PC-3 (cell line): ENCODE measurements at regions of chr16 and their contacts with region 1.

Region 1: GRCh38 chr16:58345574-58346354 is 46.5 kb upstream of the GINS3 start:
- DNase-seq: peak; percentile 37
- ATAC-seq: no peak
- H3K4me3 ChIP-seq: no peak overlapping the region
- H3K27ac ChIP-seq: no peak overlapping the region
- H3K4me1 ChIP-seq: no peaks in the 10 kb centered on the region
- H3K27me3 ChIP-seq: no peaks in the 10 kb centered on the region
- CTCF ChIP-seq: peak; percentile 62

Region 2: DNA sequence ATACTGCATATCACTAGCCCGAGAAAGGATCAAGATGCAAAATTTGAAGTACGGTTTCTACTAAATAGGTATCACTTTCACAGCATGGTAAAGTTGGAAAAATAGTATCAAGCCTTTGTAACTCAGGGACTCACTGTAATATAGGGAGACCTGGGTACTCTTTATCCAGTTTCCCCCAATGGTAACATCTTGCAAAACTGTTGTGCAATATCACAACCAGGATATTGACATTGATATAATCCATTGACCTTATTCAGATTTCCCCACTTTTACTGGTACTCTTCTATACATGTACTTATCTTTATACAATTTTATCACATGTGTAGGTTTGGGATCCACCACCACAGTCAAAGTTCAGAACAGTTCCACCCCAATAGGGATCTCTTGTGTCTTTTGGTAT is 26.1 kb after region 1 on chr16:
- CTCF ChIA-PET with region 1: no interaction called
- POLR2A ChIA-PET with region 1: no interaction called
- intact Hi-C with region 1: no loop called
- DNase-seq: no peak
- ATAC-seq: no peak
- H3K4me3 ChIP-seq: no peak overlapping the region
- H3K27ac ChIP-seq: no peak overlapping the region
- H3K4me1 ChIP-seq: peaks cover 3% of the 10 kb centered on the region
- H3K27me3 ChIP-seq: no peaks in the 10 kb centered on the region
- CTCF ChIP-seq: no peak

Region 3: GRCh38 chr16:58384113-58385055 is 38.6 kb after region 1 on chr16:
- CTCF ChIA-PET with region 1: no interaction called
- POLR2A ChIA-PET with region 1: no interaction called
- intact Hi-C with region 1: loop called (anchors 5 kb)
- DNase-seq: no peak
- ATAC-seq: no peak
- H3K4me3 ChIP-seq: no peak overlapping the region
- H3K27ac ChIP-seq: no peak overlapping the region
- H3K4me1 ChIP-seq: no peaks in the 10 kb centered on the region
- H3K27me3 ChIP-seq: no peaks in the 10 kb centered on the region
- CTCF ChIP-seq: no peak